Psoas muscle (tissue), 8 donors: ENCODE measurements at regions of chr18 and their contacts with region 1.

Region 1: GRCh38 chr18:62566199-62566598 is 43.4 kb downstream of the ZCCHC2 start:
- DNase-seq: peak in 1 of 2 donors; percentile 69
- ATAC-seq: peak in 3 of 4 donors; percentile 68 to 86 (median 80)
- H3K4me3 ChIP-seq: no peak overlapping the region
- H3K27ac ChIP-seq: no peak overlapping the region
- H3K4me1 ChIP-seq: no peaks in the 10 kb centered on the region
- H3K27me3 ChIP-seq: no peaks in the 10 kb centered on the region
- CTCF ChIP-seq: peak; percentile 45

Region 2: DNA sequence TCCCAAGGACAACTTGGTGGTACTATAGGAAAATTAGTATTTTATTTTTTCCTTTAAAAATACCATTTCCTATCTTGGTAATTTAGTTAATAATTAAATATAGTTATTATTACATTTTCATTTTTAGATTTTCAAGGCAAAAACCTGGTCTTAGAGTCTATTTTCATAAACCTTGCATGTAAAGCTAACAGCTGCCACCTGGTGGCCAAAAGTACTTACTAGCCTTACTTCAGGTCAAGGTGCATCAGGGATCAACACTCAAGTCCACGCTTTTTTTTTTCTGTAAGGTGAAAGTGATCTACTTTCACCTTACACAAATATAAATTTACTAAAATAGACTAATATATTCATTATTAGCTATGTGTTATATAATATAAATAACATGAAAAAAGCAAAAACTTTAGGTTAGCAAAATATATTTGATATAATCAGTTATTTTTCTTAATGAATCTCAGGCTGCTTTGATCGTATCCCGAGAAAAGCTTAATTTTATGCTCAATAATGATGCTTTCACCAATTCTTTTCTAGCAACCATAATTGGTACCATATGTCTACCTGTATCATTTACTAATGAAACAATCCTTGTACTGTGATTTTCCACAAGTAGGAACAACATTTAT is 316.6 kb before region 1 on chr18:
- intact Hi-C with region 1: loop called in 1 of 2 experiments (anchors 10 kb)
- DNase-seq: peak; percentile 33 to 53
- ATAC-seq: peak in 2 of 4 donors; percentile 62 to 73
- H3K4me3 ChIP-seq: no peak overlapping the region
- H3K27ac ChIP-seq: no peak overlapping the region
- H3K4me1 ChIP-seq: no peaks in the 10 kb centered on the region
- H3K27me3 ChIP-seq: no peaks in the 10 kb centered on the region
- CTCF ChIP-seq: peak; percentile 86